Gastrocnemius medialis (tissue), 4 donors: ENCODE measurements at regions of chr20 and their contacts with region 1.

Region 1: GRCh38 chr20:35954200-35954906 is at the start of gene SCAND1:
- DNase-seq: peak; percentile 90 to 94
- ATAC-seq: peak; percentile 88 to 89
- H3K4me3 ChIP-seq: peak within 1 kb of the TSS; percentile 91 to 98 (median 96)
- H3K27ac ChIP-seq: peak within 1 kb of the TSS; percentile 92 to 99 (median 96)
- H3K4me1 ChIP-seq: peaks cover 22 to 27% of the 10 kb centered on the region in 2 donors
- H3K27me3 ChIP-seq: no peaks in the 10 kb centered on the region
- CTCF ChIP-seq: peak; percentile 90 to 97 (median 94)
- POLR2A ChIP-seq: peak; percentile 83 to 87
- total RNA-seq, gene SCAND1: 88.3 to 138 (median 118) TPM

Region 2: GRCh38 chr20:35404614-35405259 is 549.6 kb before region 1 on chr20:
- in situ Hi-C with region 1: no loop called
- intact Hi-C with region 1: no loop called
- DNase-seq: no peak
- ATAC-seq: no peak
- H3K4me3 ChIP-seq: no peak overlapping the region
- H3K27ac ChIP-seq: no peak overlapping the region
- H3K4me1 ChIP-seq: no peaks in the 10 kb centered on the region
- H3K27me3 ChIP-seq: no peaks in the 10 kb centered on the region
- CTCF ChIP-seq: no peak
- POLR2A ChIP-seq: no peak

Region 3: DNA sequence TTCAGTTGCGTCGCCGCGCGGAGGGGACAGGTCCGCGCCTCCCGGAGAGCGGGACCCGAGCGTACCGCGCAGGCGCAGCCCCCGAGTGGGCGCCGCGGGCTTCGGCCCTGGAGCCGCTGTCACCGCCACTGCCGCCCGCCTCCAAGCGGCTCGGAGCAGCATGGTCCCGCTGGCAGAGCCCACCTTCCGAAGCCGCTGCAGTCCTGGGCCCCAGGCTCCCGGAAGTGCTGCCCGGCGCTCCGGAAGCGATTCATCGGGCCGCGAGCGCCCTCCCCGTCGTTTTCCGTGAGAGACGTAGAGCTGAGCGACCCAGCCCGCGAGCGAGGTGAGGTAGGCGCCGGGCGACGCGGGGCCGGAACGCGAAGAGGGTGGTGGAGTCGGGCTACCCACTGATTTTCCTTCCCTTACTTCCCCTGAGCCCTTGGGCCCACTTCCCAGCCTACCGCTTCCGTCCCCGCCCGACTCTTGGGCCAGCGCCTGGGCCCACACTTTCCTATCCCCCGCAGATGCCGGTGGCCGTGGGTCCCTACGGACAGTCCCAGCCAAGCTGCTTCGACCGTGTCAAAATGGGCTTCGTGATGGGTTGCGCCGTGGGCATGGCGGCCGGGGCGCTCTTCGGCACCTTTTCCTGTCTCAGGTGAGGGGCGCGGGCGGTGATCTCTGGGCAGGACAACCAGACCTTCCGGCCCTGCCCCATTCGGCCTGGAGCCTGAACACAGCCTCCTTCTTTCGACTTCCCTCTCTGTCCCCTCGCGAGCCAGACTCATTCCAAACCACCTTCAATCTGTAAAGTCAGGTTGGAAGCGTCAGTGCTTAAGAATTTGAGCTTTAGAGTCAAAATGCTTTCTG is 255.0 kb before region 1 on chr20 and contains the starts of genes NFS1 and ROMO1:
- in situ Hi-C with region 1: no loop called
- intact Hi-C with region 1: loop called (anchors 2 kb)
- DNase-seq: peak; percentile 69 to 86
- ATAC-seq: peak; percentile 88 to 90
- H3K4me3 ChIP-seq: peak within 1 kb of the TSS; percentile 85 to 95 (median 92)
- H3K27ac ChIP-seq: peak within 1 kb of the TSS; percentile 88 to 97 (median 96)
- H3K4me1 ChIP-seq: peaks cover 28 to 40% of the 10 kb centered on the region in 2 donors
- H3K27me3 ChIP-seq: no peaks in the 10 kb centered on the region
- CTCF ChIP-seq: peak; percentile 5 to 35 (median 25)
- POLR2A ChIP-seq: peak; percentile 60 to 84
- total RNA-seq, gene NFS1: 31.5 to 85.8 (median 37.2) TPM
- total RNA-seq, gene ROMO1: 213 to 491 (median 309) TPM

Region 4: DNA sequence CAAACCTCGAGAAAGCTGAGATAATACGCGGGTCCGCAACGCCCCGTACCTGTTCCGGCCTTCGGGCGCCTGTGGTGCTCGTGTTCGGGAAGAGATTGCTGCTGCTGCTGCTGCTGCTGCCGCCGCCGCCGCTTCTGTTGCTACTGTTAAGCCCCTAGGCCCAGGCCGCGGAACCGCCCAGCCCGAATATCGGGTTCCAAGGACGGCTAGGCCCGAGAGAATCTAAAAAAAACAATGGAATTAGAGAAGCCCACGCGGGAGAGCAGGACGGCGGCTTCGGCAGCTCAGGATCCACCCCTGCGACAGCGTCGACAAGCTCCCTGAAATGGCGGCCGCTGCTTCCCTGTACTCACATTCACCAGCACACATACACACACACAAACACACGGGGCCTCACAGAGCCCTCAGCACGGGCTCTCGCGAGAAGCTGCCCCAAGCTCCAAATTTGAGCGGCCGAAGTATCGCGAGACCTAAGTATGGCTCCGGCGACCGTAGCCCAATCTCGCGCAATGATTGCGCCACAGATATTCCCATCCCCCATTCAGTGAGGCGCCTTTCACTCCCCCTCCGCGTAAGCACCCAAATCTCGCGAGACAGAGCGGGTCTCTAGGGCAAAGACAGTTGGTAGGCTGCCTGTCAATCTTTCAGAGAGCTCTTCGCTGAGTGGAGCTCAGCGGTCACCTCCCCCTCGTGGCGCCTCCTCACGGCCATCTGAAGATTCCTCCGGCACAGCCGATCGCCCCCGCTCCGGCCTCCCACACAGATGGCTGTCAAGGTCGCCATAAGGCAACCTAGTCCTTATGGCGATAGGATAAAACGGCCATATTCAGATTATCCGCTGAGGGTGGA is 212.2 kb before region 1 on chr20 and contains the start of gene RBM39:
- in situ Hi-C with region 1: no loop called
- intact Hi-C with region 1: loop called (anchors 2 kb)
- DNase-seq: peak; percentile 100
- ATAC-seq: peak; percentile 91 to 95
- H3K4me3 ChIP-seq: peak within 1 kb of the TSS; percentile 80 to 96 (median 88)
- H3K27ac ChIP-seq: peak within 1 kb of the TSS; percentile 96 to 100 (median 98)
- H3K4me1 ChIP-seq: peaks cover 37 to 39% of the 10 kb centered on the region in 2 donors
- H3K27me3 ChIP-seq: no peaks in the 10 kb centered on the region
- CTCF ChIP-seq: peak; percentile 28 to 48 (median 39)
- POLR2A ChIP-seq: peak; percentile 97 to 98
- total RNA-seq, gene RBM39: 98.5 to 165 (median 130) TPM

Region 5: DNA sequence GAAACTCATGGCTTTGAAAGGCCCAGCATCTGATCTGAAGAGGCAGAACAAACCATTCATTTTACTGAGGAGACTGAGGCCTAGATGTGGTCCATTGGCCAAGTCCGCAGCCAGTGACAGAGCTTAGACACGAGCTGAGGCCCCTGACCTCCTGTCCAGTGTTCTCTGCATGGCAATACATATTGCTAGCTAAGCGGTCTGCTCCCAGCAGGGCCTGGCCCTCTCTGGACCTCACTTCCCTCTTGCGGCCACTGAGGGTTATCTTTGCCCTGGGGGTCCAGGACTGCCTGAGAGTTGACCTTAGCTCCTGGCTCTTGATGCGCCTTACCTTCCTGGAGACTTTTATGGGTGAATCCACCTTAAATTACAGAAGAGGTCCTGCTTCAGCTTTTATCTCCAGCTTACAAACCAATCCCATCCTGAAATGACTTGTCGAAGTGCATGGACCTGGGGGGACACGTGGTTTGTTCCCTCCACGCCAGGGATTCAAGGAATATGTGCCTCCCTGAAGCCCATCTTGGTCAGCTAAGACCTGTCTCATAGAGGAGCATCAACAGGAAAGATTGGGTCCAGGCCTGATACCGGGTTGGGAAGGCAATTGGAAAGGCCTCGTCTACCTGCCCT is 89.7 kb after region 1 on chr20:
- in situ Hi-C with region 1: no loop called
- intact Hi-C with region 1: no loop called
- DNase-seq: no peak
- ATAC-seq: no peak
- H3K4me3 ChIP-seq: no peak overlapping the region
- H3K27ac ChIP-seq: no peak overlapping the region
- H3K4me1 ChIP-seq: peaks cover 27 to 32% of the 10 kb centered on the region in 2 donors
- H3K27me3 ChIP-seq: no peaks in the 10 kb centered on the region
- CTCF ChIP-seq: no peak
- POLR2A ChIP-seq: no peak

Region 6: DNA sequence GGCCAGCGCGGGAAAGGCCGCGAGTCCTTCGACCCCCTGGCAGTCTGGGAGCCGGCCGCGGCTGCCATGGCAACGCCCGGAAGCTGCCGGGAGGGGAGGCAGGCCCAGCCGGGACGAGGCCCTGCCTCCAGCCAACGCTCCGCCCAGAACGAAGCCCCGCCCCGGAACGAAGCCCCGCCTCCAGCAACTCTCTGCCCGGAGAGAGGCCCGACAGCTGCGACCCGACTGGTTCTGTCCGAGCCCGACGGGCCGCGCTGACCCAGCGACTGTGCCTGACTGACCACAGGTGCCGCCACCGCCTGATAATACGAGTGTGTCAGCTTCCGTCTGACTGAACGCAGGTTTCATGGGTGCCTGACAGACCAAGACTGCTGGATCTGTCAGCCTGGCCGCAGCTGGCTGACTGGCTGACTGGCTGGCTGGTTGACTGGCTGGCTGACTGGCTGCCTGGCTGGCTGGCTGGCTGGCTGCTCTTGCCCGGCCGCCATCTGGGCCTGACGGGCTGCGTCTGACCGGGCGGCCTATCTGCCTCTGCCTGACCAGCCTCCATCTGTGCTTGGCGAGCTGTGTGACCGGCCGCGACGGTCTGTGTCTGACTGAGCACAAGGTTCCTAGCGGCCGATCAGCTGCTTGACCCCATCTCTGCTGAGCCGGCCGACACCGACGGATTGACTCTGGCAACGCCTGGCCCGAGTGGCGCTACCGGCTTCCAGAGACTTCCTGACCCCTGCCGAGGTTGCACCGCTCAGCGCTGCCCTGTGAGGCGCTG is 110.5 kb after region 1 on chr20:
- in situ Hi-C with region 1: no loop called
- intact Hi-C with region 1: loop called (anchors 1 kb)
- DNase-seq: peak; percentile 87 to 93
- ATAC-seq: peak; percentile 95 to 97
- H3K4me3 ChIP-seq: peak overlapping the region; percentile 65 to 95 (median 68)
- H3K27ac ChIP-seq: peak overlapping the region; percentile 89 to 91 (median 91)
- H3K4me1 ChIP-seq: no peaks in the 10 kb centered on the region
- H3K27me3 ChIP-seq: no peaks in the 10 kb centered on the region
- CTCF ChIP-seq: peak in 1 of 5 experiments; percentile 16
- POLR2A ChIP-seq: peak; percentile 75 to 87